ENCODE measurements at regions of chr10 and their contacts with region 1.

Region 1: DNA sequence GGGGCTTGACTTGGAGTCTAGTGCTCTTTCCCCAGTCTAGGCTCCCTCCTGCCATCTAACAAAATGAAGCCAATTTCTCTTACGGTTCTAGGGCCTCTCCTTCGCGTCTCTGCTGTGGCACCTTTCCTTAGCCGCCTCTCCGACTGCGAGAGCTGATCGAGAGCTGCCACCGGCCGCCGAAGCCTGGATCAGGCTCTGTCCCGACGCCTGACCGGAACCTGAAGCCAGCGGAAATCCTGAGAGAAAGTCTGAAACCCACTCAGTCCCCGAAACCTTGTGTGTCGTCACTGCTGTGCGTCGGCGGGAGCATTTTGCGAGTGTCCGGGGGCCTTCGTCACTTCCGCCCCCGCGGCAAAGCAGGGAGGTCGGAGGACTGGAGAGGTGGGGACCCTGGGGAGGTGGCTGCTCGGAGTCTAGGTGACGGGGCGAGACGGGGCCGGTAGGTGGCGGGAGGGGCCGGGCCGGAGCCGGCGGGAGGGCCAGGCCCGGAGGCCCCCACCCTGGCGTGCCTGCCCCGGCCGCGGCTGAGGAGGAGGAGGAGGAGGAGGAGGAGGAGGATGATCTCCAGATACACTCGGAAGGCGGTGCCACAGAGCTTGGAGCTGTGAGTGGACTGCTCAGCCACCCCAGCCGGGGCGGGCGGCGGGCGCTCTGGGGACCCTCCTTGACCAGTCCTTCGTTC is at the starts of genes ECD and FAM149B1:
- DNase-seq: peak; percentile 70
- ATAC-seq: peak; percentile 99
- H3K4me3 ChIP-seq: peak within 1 kb of the TSS; percentile 74 to 77
- H3K27ac ChIP-seq: peak within 1 kb of the TSS; percentile 93
- H3K4me1 ChIP-seq: 0 out of 2 replicates have a peak, but pooled peaks cover 3% of the 10 kb centered on the region
- H3K27me3 ChIP-seq: no peaks in the 10 kb centered on the region
- CTCF ChIP-seq: no peak; the same call in none of the 2 replicates
- total RNA-seq, gene ECD: 53.9 TPM
- total RNA-seq, gene FAM149B1: 20.8 TPM

Region 2: GRCh38 chr10:72612203-72612826 is 555.6 kb before region 1 on chr10:
- CTCF ChIA-PET with region 1: no interaction called
- POLR2A ChIA-PET with region 1: no interaction called
- in situ Hi-C with region 1: no loop called
- intact Hi-C with region 1: no loop called
- DNase-seq: no peak
- ATAC-seq: no peak
- H3K4me3 ChIP-seq: no peak overlapping the region
- H3K27ac ChIP-seq: no peak overlapping the region
- H3K4me1 ChIP-seq: no peaks in the 10 kb centered on the region; the same call in 1 of the 2 replicates
- H3K27me3 ChIP-seq: no peaks in the 10 kb centered on the region
- CTCF ChIP-seq: no peak

Region 3: DNA sequence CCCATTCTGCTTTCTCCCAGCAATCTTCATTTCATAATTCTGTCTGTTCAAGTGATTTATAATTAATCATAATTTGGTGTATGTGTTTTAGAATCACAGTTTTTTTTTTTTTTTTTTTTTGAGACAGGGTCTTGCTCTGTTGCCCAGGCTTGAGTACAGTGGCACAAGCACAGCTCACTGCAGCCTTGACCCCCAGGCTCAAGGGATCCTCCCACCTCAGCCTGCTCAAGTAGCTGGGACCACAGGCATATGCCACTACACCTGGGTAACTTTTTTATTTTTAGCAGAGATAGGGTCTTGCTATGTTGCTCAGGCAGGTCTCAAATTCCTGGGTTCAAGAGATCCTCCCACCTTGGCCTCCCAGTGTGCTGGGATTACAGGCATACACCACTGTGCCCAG is 164.1 kb before region 1 on chr10:
- CTCF ChIA-PET with region 1: no interaction called
- POLR2A ChIA-PET with region 1: interaction called, 10 read pairs
- in situ Hi-C with region 1: no loop called
- intact Hi-C with region 1: no loop called
- DNase-seq: no peak
- ATAC-seq: no peak
- H3K4me3 ChIP-seq: no peak overlapping the region
- H3K27ac ChIP-seq: no peak overlapping the region
- H3K4me1 ChIP-seq: no peaks in the 10 kb centered on the region
- H3K27me3 ChIP-seq: no peaks in the 10 kb centered on the region
- CTCF ChIP-seq: no peak

Region 4: DNA sequence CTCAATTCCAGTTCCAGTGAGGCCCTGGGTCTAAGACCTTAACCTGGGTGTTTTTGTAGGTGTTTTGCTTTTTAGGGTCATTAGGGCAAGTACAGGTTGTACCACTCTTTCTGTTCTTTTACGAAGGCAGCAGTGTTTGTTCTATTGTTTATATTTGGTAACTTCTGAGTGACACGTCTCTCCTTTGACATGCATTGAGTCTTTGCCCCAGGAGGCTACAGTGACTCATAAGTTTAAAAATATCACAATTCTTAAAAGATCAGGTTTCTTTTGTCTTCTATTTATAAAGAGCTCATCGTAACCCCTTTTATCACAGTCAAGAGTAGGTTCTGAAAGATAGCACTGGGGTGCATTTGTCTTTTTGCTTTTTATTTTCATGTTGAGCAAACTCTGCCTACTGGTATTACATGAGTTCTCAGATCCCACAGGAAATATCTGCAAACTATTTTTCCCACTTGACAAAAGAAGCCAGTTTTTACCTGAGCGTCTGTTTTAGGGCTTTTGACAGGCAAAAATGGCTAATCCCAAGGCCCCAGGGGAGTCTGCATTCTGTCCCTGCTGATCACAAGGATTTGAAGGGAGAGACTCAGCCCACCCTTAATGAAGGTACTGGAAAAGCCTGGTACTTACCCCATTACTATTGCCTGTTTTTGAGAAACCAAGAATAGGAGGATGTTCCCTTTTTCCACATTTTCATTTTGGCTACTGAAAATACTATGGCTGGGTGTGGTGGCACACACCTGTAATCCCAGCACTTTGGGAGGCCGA is 49.8 kb before region 1 on chr10:
- CTCF ChIA-PET with region 1: no interaction called
- POLR2A ChIA-PET with region 1: no interaction called
- in situ Hi-C with region 1: no loop called
- intact Hi-C with region 1: no loop called
- DNase-seq: no peak
- ATAC-seq: peak; percentile 61; the same call in 1 of the 2 replicates
- H3K4me3 ChIP-seq: no peak overlapping the region
- H3K27ac ChIP-seq: no peak overlapping the region
- H3K4me1 ChIP-seq: peaks cover 6% of the 10 kb centered on the region; the same call in 1 of the 2 replicates
- H3K27me3 ChIP-seq: no peaks in the 10 kb centered on the region
- CTCF ChIP-seq: no peak

Region 5: DNA sequence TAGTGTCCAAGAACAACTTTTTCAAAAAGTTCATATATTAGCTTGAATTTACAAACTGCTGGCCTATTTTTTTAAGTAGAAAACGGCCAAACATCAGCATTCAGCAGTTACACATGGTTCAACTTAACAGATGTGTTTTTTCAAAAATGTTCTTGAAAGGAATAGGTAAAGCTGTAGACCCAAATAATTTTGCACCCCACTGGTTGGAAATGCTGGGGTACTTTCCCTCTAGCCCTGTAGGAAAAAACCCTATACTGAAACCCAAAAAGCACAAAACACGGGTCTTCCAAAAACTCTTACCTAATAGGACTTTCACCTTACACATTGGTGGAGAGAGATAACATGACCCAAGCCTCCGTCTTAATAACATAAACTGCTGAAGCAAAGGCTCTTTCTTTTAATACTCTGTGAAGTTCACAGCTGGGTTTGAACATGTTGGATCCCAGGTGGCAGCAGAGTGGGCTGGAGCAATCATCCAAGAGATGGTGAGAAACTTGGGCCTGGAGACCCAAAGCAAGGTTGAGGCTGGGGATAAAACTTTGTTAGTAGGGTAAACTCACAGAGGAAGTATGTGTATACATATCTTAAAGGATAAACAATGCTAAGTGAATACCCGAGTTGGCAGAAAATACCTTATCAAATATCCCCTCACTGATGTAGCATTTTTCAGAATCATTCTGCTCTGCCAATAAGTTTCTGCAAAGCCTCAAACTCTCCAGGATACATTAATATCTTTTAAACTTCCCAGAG is 79.8 kb after region 1 on chr10:
- CTCF ChIA-PET with region 1: no interaction called
- POLR2A ChIA-PET with region 1: no interaction called
- in situ Hi-C with region 1: no loop called
- intact Hi-C with region 1: no loop called
- DNase-seq: no peak
- ATAC-seq: 0 out of 2 replicates have a peak, but pooled peaks have one; percentile 1
- H3K4me3 ChIP-seq: peak overlapping the region; percentile 66 to 95
- H3K27ac ChIP-seq: peak overlapping the region; percentile 99
- H3K4me1 ChIP-seq: peaks cover 45% of the 10 kb centered on the region
- H3K27me3 ChIP-seq: no peaks in the 10 kb centered on the region
- CTCF ChIP-seq: no peak

Region 6: GRCh38 chr10:73785221-73785720 is 617.3 kb after region 1 on chr10 and contains the start of gene ZSWIM8:
- CTCF ChIA-PET with region 1: no interaction called
- POLR2A ChIA-PET with region 1: no interaction called
- in situ Hi-C with region 1: no loop called
- intact Hi-C with region 1: no loop called
- DNase-seq: peak; percentile 86
- ATAC-seq: peak; percentile 92
- H3K4me3 ChIP-seq: peak within 1 kb of the TSS; percentile 86 to 95
- H3K27ac ChIP-seq: peak within 1 kb of the TSS; percentile 92
- H3K4me1 ChIP-seq: peaks cover 27% of the 10 kb centered on the region
- H3K27me3 ChIP-seq: no peaks in the 10 kb centered on the region
- CTCF ChIP-seq: no peak
- total RNA-seq, gene ZSWIM8: 109 TPM

Measured in Panc1 (cell line).